ENCODE measurements at regions of chr10 and their contacts with region 1.

Region 1: DNA sequence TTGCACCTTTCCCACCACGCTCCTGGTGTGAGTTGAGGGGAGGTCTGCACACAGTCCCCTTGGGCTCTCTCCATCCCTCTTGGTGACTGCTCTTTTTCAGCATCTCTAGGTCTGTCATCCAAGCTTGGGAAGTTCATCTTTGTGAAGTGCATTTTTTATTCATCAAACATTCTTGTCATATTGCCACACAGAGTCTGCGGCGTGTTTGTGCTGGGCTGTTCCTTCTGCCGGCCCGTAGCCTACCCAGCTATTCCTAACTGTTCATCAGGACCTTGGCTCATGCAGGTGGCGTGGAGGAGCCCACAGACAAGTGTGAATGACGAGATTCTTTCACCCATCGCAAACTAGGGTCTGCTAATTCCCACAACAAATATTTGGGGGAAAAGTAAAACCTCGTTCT is 164.8 kb downstream of the RTKN2 start:
- DNase-seq: no peak
- ATAC-seq: no peak
- H3K4me3 ChIP-seq: no peak overlapping the region
- H3K4me3 Mint-ChIP-seq: no peak overlapping the region
- H3K27ac ChIP-seq: no peak overlapping the region
- H3K27ac Mint-ChIP-seq: no peak overlapping the region
- H3K4me1 ChIP-seq: peaks cover 43 to 44% of the 10 kb centered on the region in 2 donors
- H3K4me1 Mint-ChIP-seq: peaks cover 59% of the 10 kb centered on the region
- H3K27me3 ChIP-seq: no peaks in the 10 kb centered on the region
- H3K27me3 Mint-ChIP-seq: no peaks in the 10 kb centered on the region
- CTCF ChIP-seq: no peak

Region 2: GRCh38 chr10:62071846-62072281 is 32.0 kb before region 1 on chr10:
- CTCF ChIA-PET with region 1: no interaction called
- POLR2A ChIA-PET with region 1: no interaction called
- intact Hi-C with region 1: loop called (anchors 5 kb)
- DNase-seq: no peak
- ATAC-seq: no peak
- H3K4me3 ChIP-seq: no peak overlapping the region
- H3K4me3 Mint-ChIP-seq: no peak overlapping the region
- H3K27ac ChIP-seq: peak overlapping the region in 1 of 2 donors; percentile 14
- H3K27ac Mint-ChIP-seq: peak overlapping the region; percentile 65
- H3K4me1 ChIP-seq: peaks cover 4 to 11% of the 10 kb centered on the region in 2 donors
- H3K4me1 Mint-ChIP-seq: peaks cover 58% of the 10 kb centered on the region
- H3K27me3 ChIP-seq: no peaks in the 10 kb centered on the region
- H3K27me3 Mint-ChIP-seq: no peaks in the 10 kb centered on the region
- CTCF ChIP-seq: no peak

Region 3: GRCh38 chr10:62540389-62540788 is 436.5 kb after region 1 on chr10:
- CTCF ChIA-PET with region 1: no interaction called
- POLR2A ChIA-PET with region 1: no interaction called
- intact Hi-C with region 1: no loop called
- DNase-seq: peak; percentile 55
- ATAC-seq: peak; percentile 58
- H3K4me3 ChIP-seq: peak overlapping the region in 2 of 5 experiments; percentile 10 to 31
- H3K4me3 Mint-ChIP-seq: peak overlapping the region; percentile 66
- H3K27ac ChIP-seq: peak overlapping the region; percentile 87
- H3K27ac Mint-ChIP-seq: peak overlapping the region; percentile 93
- H3K4me1 ChIP-seq: peaks cover 48% of the 10 kb centered on the region in 2 donors
- H3K4me1 Mint-ChIP-seq: peaks cover 67% of the 10 kb centered on the region
- H3K27me3 ChIP-seq: no peaks in the 10 kb centered on the region
- H3K27me3 Mint-ChIP-seq: no peaks in the 10 kb centered on the region
- CTCF ChIP-seq: no peak

Measured in B cell (primary cell).